HCT116 (cell line): ENCODE measurements at regions of chr5 and their contacts with region 1.

Region 1: GRCh38 chr5:94693043-94693822 is 74.8 kb downstream of the SLF1 start:
- DNase-seq: peak; percentile 29
- ATAC-seq: peak; percentile 63
- H3K4me3 ChIP-seq: no peak overlapping the region
- H3K27ac ChIP-seq: no peak overlapping the region
- H3K4me1 ChIP-seq: no peaks in the 10 kb centered on the region
- H3K27me3 ChIP-seq: no peaks in the 10 kb centered on the region
- CTCF ChIP-seq: peak; percentile 18 to 48 (median 34); a peak in 3 of 6 replicates
- POLR2A ChIP-seq: no peak
- RAD21 ChIP-seq: peak; percentile 52; the same call in 1 of the 2 replicates

Region 2: GRCh38 chr5:93915142-93915553 is 778.1 kb before region 1 on chr5:
- CTCF ChIA-PET with region 1: no interaction called
- POLR2A ChIA-PET with region 1: no interaction called
- RAD21 ChIA-PET with region 1: no interaction called
- intact Hi-C with region 1: loop called (anchors 10 kb)
- DNase-seq: peak; percentile 54
- ATAC-seq: peak; percentile 62
- H3K4me3 ChIP-seq: no peak overlapping the region
- H3K27ac ChIP-seq: no peak overlapping the region
- H3K4me1 ChIP-seq: no peaks in the 10 kb centered on the region
- H3K27me3 ChIP-seq: no peaks in the 10 kb centered on the region
- CTCF ChIP-seq: peak; percentile 35 to 79 (median 42); a peak in 4 of 6 replicates
- POLR2A ChIP-seq: no peak
- RAD21 ChIP-seq: peak; percentile 76

Region 3: GRCh38 chr5:94632024-94632423 is 61.2 kb before region 1 on chr5:
- CTCF ChIA-PET with region 1: no interaction called
- POLR2A ChIA-PET with region 1: no interaction called
- RAD21 ChIA-PET with region 1: no interaction called
- intact Hi-C with region 1: no loop called
- DNase-seq: no peak
- ATAC-seq: no peak
- H3K4me3 ChIP-seq: no peak overlapping the region
- H3K27ac ChIP-seq: no peak overlapping the region
- H3K4me1 ChIP-seq: no peaks in the 10 kb centered on the region
- H3K27me3 ChIP-seq: no peaks in the 10 kb centered on the region
- CTCF ChIP-seq: no peak
- POLR2A ChIP-seq: no peak
- RAD21 ChIP-seq: no peak